PC-3 (cell line): ENCODE measurements at regions of chr10 and their contacts with region 1.

Region 1: GRCh38 chr10:35195361-35196306 is 69.0 kb downstream of the CREM start:
- DNase-seq: peak; percentile 99
- ATAC-seq: peak; percentile 96
- H3K4me3 ChIP-seq: peak overlapping the region; percentile 60
- H3K27ac ChIP-seq: peak overlapping the region; percentile 78
- H3K4me1 ChIP-seq: peaks cover 17% of the 10 kb centered on the region
- H3K27me3 ChIP-seq: no peaks in the 10 kb centered on the region
- CTCF ChIP-seq: peak; percentile 100

Region 2: DNA sequence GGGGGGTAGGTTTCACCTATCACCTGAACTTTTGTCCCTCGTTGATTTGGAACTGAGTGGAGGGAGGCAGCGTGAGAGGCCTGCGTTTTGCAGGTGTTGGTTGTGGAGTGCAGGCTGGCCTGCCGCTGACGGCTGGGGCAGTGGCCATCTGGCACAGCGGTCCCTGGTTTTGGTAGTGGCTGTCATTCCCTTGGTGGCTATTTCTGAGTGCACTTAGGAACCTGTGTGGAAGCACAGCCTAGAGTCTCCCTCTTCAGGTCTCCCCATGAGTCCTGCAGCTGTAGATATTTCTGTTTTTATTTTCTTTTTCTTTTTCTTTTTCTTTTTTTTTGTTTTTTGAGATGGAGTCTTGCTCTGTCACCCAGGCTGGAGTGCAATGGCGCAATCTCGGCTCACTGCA is 234.7 kb before region 1 on chr10:
- CTCF ChIA-PET with region 1: no interaction called
- POLR2A ChIA-PET with region 1: interaction called, 11 read pairs
- intact Hi-C with region 1: no loop called
- DNase-seq: peak; percentile 66
- ATAC-seq: peak; percentile 83
- H3K4me3 ChIP-seq: no peak overlapping the region
- H3K27ac ChIP-seq: no peak overlapping the region
- H3K4me1 ChIP-seq: 0 out of 2 replicates have a peak, but pooled peaks cover 3% of the 10 kb centered on the region
- H3K27me3 ChIP-seq: no peaks in the 10 kb centered on the region
- CTCF ChIP-seq: peak; percentile 79

Region 3: DNA sequence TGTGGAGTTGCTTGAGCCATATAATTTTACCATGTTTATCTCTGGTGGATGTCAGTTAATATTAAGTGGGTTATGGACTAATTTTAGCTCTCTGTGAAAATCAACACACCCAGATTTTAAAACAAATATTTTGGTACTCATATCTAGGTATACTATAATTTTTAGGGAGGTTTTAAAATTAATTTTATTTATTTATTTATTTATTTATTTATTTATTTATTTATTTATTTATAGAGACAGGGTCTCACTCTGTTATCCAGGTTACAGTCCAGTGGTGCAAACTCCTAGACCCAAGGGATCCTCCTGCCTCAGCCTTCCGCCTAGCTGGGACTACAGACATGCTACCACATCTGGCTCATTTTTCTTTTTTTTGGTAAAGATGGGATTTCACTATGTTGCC is 76.3 kb before region 1 on chr10:
- CTCF ChIA-PET with region 1: interaction called, 43 read pairs
- POLR2A ChIA-PET with region 1: interaction called, 4 read pairs
- intact Hi-C with region 1: loop called (anchors 1 kb)
- DNase-seq: no peak
- ATAC-seq: no peak
- H3K4me3 ChIP-seq: no peak overlapping the region
- H3K27ac ChIP-seq: no peak overlapping the region
- H3K4me1 ChIP-seq: no peaks in the 10 kb centered on the region
- H3K27me3 ChIP-seq: no peaks in the 10 kb centered on the region
- CTCF ChIP-seq: no peak

Region 4: DNA sequence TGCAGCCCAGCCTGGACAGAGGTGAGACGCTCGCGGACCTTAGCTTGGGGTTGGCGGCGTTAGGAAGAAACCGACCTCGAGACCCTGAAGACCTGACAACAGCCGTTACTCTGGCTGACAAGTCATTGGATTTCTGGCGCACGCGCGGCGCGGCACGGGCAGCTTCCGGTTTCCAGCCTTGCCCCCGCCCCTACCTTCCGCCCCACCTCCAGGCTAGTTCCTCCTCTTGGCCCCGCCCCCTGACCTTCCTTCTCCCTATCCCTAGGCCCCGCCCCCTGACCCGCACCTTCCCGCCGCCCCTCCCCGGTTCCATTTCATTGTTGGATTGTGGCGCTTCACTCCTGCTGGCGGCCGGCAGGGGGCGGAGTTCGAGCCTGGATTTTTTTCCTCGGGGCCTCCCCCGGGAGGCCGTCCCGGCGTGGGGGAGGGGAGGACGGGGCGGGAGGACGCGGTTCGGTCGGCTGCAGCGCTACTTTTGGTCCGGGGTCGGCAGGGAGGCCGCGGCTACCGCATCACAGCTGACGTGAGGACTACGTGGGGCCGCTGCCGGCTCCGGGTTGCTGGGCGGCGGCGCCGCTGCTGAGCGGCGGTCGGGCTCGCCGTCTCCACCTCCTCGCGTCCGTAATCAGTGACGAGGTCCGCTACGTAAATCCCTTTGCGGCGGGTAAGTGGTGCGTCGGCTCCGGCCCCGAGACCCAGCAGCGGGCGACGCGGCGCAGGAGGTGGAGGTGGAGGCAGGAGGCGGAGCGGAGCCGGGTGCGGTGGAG is 68.9 kb before region 1 on chr10 and contains the start of gene CREM:
- CTCF ChIA-PET with region 1: interaction called, 99 read pairs
- POLR2A ChIA-PET with region 1: interaction called, 39 read pairs
- intact Hi-C with region 1: loop called (anchors 1 kb)
- DNase-seq: peak; percentile 100
- ATAC-seq: peak; percentile 80
- H3K4me3 ChIP-seq: peak within 1 kb of the TSS; percentile 74
- H3K27ac ChIP-seq: peak within 1 kb of the TSS; percentile 87
- H3K4me1 ChIP-seq: peaks cover 41% of the 10 kb centered on the region
- H3K27me3 ChIP-seq: no peaks in the 10 kb centered on the region
- CTCF ChIP-seq: peak; percentile 99
- total RNA-seq, gene CREM: 150 and 195 TPM in 2 replicates

Region 5: GRCh38 chr10:35184527-35185171 is 11.0 kb before region 1 on chr10:
- CTCF ChIA-PET with region 1: interaction called, 11 read pairs
- POLR2A ChIA-PET with region 1: interaction called, 7 read pairs
- intact Hi-C with region 1: no loop called
- DNase-seq: no peak
- ATAC-seq: no peak
- H3K4me3 ChIP-seq: no peak overlapping the region
- H3K27ac ChIP-seq: no peak overlapping the region
- H3K4me1 ChIP-seq: peaks cover 10% of the 10 kb centered on the region
- H3K27me3 ChIP-seq: no peaks in the 10 kb centered on the region
- CTCF ChIP-seq: no peak

Region 6: DNA sequence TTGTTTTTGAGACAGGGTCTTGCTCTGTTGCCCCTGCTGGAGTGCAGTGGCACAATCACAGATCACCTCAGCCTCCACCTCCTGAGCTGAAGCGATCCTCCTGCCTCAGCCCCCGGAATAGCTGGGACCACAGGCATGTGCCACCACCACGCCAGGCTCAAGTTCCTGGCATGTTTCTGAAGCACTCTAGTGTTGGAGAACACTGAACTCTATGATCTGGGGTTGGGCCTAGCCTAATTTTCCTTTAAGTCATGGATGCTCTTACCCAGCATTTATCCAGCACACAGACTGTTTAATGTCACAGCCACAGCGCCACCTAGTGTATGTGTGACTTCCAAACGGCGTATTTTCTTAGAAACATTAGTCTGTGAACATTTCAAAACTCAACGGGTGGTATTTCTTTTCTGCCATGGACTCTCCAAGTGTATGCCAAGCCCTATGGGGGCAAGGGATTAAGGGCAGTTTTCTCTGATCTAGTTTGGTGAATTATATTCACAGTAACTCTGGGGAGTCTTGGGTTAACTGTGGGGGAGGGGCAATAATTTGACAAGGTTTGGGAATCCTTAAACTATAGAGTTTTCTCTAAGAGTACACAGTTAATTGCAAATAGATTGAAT is 22.8 kb after region 1 on chr10:
- CTCF ChIA-PET with region 1: interaction called, 18 read pairs
- POLR2A ChIA-PET with region 1: interaction called, 4 read pairs
- intact Hi-C with region 1: loop called (anchors 1 kb)
- DNase-seq: peak; percentile 100
- ATAC-seq: peak; percentile 86
- H3K4me3 ChIP-seq: peak overlapping the region; percentile 5; the same call in 1 of the 2 replicates
- H3K27ac ChIP-seq: no peak overlapping the region
- H3K4me1 ChIP-seq: no peaks in the 10 kb centered on the region
- H3K27me3 ChIP-seq: no peaks in the 10 kb centered on the region
- CTCF ChIP-seq: peak; percentile 100